Naive thymus-derived CD4-positive, alpha-beta T cell (primary cell): ENCODE measurements at regions of chr3 and their contacts with region 1.

Region 1: GRCh38 chr3:105827959-105828358 is 40.9 kb downstream of the CBLB start:
- DNase-seq: no peak
- ATAC-seq: no peak
- H3K4me3 ChIP-seq: no peak overlapping the region
- H3K4me3 Mint-ChIP-seq: peak overlapping the region in 4 of 10 donors; percentile 29 to 52 (median 40)
- H3K27ac ChIP-seq: no peak overlapping the region
- H3K27ac Mint-ChIP-seq: peak overlapping the region in 4 of 9 donors; percentile 1 to 90 (median 20)
- H3K4me1 ChIP-seq: peaks cover 37 to 65% of the 10 kb centered on the region in 2 donors
- H3K4me1 Mint-ChIP-seq: peaks cover 57 to 92% (median 88%) of the 10 kb centered on the region in 7 donors
- H3K27me3 ChIP-seq: no peaks in the 10 kb centered on the region
- H3K27me3 Mint-ChIP-seq: no peaks in the 10 kb centered on the region

Region 2: DNA sequence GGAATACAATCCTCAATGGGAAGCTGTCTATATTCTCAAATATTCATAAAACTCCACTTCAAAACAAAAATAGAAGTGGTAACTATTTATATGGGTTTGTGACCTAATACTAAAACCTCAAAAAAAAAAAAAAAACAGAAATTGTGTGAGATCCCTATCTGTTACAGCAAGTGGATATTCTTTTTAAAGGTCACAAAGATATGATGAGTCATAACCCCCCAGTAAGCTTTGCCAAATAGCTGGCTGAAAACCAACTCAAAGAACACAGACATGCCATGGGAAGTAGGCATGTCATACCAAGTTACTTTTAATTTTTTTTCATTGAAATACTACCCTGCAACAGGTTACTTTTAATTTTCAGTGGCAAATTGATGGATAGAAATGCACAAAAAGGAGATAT is 21.6 kb before region 1 on chr3:
- CTCF ChIA-PET with region 1: no interaction called
- POLR2A ChIA-PET with region 1: interaction called, 3 read pairs
- intact Hi-C with region 1: loop called (anchors 1 kb)
- DNase-seq: no peak
- ATAC-seq: peak; percentile 78
- H3K4me3 ChIP-seq: no peak overlapping the region
- H3K4me3 Mint-ChIP-seq: peak overlapping the region in 1 of 10 donors; percentile 11
- H3K27ac ChIP-seq: no peak overlapping the region
- H3K27ac Mint-ChIP-seq: peak overlapping the region in 4 of 9 donors; percentile 0 to 85 (median 44)
- H3K4me1 ChIP-seq: peaks cover 11 to 23% of the 10 kb centered on the region in 2 donors
- H3K4me1 Mint-ChIP-seq: peaks cover 39 to 86% (median 65%) of the 10 kb centered on the region in 7 donors
- H3K27me3 ChIP-seq: no peaks in the 10 kb centered on the region
- H3K27me3 Mint-ChIP-seq: no peaks in the 10 kb centered on the region

Region 3: GRCh38 chr3:105812194-105812586 is 15.8 kb before region 1 on chr3:
- CTCF ChIA-PET with region 1: no interaction called
- POLR2A ChIA-PET with region 1: no interaction called
- intact Hi-C with region 1: loop called (anchors 1 to 2 kb)
- DNase-seq: no peak
- ATAC-seq: no peak
- H3K4me3 ChIP-seq: no peak overlapping the region
- H3K4me3 Mint-ChIP-seq: peak overlapping the region in 2 of 10 donors; percentile 2 to 14
- H3K27ac ChIP-seq: no peak overlapping the region
- H3K27ac Mint-ChIP-seq: peak overlapping the region in 5 of 9 donors; percentile 3 to 38 (median 10)
- H3K4me1 ChIP-seq: peaks cover under 1 to 7% of the 10 kb centered on the region in 2 donors
- H3K4me1 Mint-ChIP-seq: peaks cover 42 to 83% (median 68%) of the 10 kb centered on the region in 7 donors
- H3K27me3 ChIP-seq: no peaks in the 10 kb centered on the region
- H3K27me3 Mint-ChIP-seq: no peaks in the 10 kb centered on the region

Region 4: GRCh38 chr3:106049821-106050220 is 221.9 kb after region 1 on chr3:
- CTCF ChIA-PET with region 1: no interaction called
- POLR2A ChIA-PET with region 1: no interaction called
- intact Hi-C with region 1: no loop called
- DNase-seq: no peak
- ATAC-seq: no peak
- H3K4me3 ChIP-seq: no peak overlapping the region
- H3K4me3 Mint-ChIP-seq: no peak overlapping the region
- H3K27ac ChIP-seq: no peak overlapping the region
- H3K27ac Mint-ChIP-seq: no peak overlapping the region
- H3K4me1 ChIP-seq: no peaks in the 10 kb centered on the region
- H3K4me1 Mint-ChIP-seq: peaks cover 0 to 10% (median 3%) of the 10 kb centered on the region in 7 donors
- H3K27me3 ChIP-seq: no peaks in the 10 kb centered on the region
- H3K27me3 Mint-ChIP-seq: no peaks in the 10 kb centered on the region

Region 5: DNA sequence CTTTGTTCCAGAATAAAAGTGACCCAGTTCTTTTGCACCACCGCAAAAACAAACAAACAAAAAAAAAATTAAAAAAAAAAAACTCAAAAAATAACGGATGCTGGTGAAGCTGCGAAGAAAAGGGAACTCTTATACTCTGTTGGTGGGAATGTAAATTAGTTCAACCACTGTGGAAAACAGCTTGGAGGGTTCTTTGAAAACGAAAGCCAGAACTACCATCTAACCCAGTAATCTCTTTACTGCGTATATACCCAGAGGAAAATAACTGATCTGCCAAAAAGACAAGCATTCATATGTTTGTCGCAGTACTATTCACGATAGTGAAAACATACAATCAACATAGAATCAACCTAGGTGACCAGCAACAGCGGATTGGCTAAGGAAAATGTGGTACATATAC is 339.8 kb after region 1 on chr3:
- CTCF ChIA-PET with region 1: no interaction called
- POLR2A ChIA-PET with region 1: no interaction called
- intact Hi-C with region 1: no loop called
- DNase-seq: no peak
- ATAC-seq: no peak
- H3K4me3 ChIP-seq: no peak overlapping the region
- H3K4me3 Mint-ChIP-seq: no peak overlapping the region
- H3K27ac ChIP-seq: no peak overlapping the region
- H3K27ac Mint-ChIP-seq: no peak overlapping the region
- H3K4me1 ChIP-seq: peaks cover 6 to 8% of the 10 kb centered on the region in 2 donors
- H3K4me1 Mint-ChIP-seq: peaks cover 6 to 27% (median 21%) of the 10 kb centered on the region in 7 donors
- H3K27me3 ChIP-seq: no peaks in the 10 kb centered on the region
- H3K27me3 Mint-ChIP-seq: no peaks in the 10 kb centered on the region

Region 6: DNA sequence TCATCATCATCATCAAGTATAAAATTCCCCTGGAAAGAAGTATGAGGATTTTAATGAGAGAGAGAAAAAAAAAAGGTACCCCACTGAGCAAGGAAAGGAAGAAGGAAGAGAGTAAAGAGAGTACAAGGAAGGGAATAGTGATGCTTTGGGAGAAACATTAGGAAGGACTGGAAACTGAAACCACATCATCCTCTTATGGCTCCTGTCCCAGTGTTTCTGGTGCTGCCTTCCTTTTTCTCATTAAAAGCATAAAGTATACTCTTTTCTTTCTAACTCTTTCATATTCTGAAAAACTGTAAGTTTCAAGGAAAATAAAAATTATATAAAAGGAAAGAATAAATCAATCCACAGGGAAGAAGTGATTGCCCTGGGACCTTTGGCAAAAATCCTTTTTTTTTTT is 657.3 kb after region 1 on chr3:
- CTCF ChIA-PET with region 1: no interaction called
- POLR2A ChIA-PET with region 1: no interaction called
- intact Hi-C with region 1: no loop called
- DNase-seq: no peak
- ATAC-seq: no peak
- H3K4me3 ChIP-seq: no peak overlapping the region
- H3K4me3 Mint-ChIP-seq: no peak overlapping the region
- H3K27ac ChIP-seq: no peak overlapping the region
- H3K27ac Mint-ChIP-seq: no peak overlapping the region
- H3K4me1 ChIP-seq: no peaks in the 10 kb centered on the region
- H3K4me1 Mint-ChIP-seq: no peaks in the 10 kb centered on the region
- H3K27me3 ChIP-seq: no peaks in the 10 kb centered on the region
- H3K27me3 Mint-ChIP-seq: peaks cover 0 to 4% (median 0%) of the 10 kb centered on the region in 5 donors

Region 7: GRCh38 chr3:106699122-106699521 is 871.2 kb after region 1 on chr3:
- CTCF ChIA-PET with region 1: no interaction called
- POLR2A ChIA-PET with region 1: no interaction called
- intact Hi-C with region 1: no loop called
- DNase-seq: no peak
- ATAC-seq: no peak
- H3K4me3 ChIP-seq: no peak overlapping the region
- H3K4me3 Mint-ChIP-seq: no peak overlapping the region
- H3K27ac ChIP-seq: no peak overlapping the region
- H3K27ac Mint-ChIP-seq: no peak overlapping the region
- H3K4me1 ChIP-seq: no peaks in the 10 kb centered on the region
- H3K4me1 Mint-ChIP-seq: no peaks in the 10 kb centered on the region
- H3K27me3 ChIP-seq: no peaks in the 10 kb centered on the region
- H3K27me3 Mint-ChIP-seq: peaks cover 0 to 9% (median 4%) of the 10 kb centered on the region in 5 donors